Activated naive CD4-positive, alpha-beta T cell treated with anti-CD3 and anti-CD28 coated beads for 36 hours (primary cell): ENCODE measurements at regions of chr1 and their contacts with region 1.

Region 1: GRCh38 chr1:201023517-201023902 is at the start of gene KIF21B:
- DNase-seq: peak; percentile 91
- H3K4me3 Mint-ChIP-seq: peak within 1 kb of the TSS; percentile 90
- H3K27ac Mint-ChIP-seq: peak within 1 kb of the TSS; percentile 100
- H3K4me1 Mint-ChIP-seq: peaks cover 72% of the 10 kb centered on the region
- H3K27me3 Mint-ChIP-seq: no peaks in the 10 kb centered on the region
- total RNA-seq, gene KIF21B: 45.5 to 46.3 TPM

Region 2: GRCh38 chr1:200620273-200621131 is 403.0 kb before region 1 on chr1 and contains the start of gene KIF14:
- CTCF ChIA-PET with region 1: interaction called, 3 read pairs
- intact Hi-C with region 1: loop called (anchors 1 kb)
- DNase-seq: peak; percentile 95
- H3K4me3 Mint-ChIP-seq: peak within 1 kb of the TSS; percentile 92
- H3K27ac Mint-ChIP-seq: peak within 1 kb of the TSS; percentile 66
- H3K4me1 Mint-ChIP-seq: peaks cover 16% of the 10 kb centered on the region
- H3K27me3 Mint-ChIP-seq: peaks cover 2% of the 10 kb centered on the region
- total RNA-seq, gene KIF14: 16.4 to 16.9 TPM

Region 3: DNA sequence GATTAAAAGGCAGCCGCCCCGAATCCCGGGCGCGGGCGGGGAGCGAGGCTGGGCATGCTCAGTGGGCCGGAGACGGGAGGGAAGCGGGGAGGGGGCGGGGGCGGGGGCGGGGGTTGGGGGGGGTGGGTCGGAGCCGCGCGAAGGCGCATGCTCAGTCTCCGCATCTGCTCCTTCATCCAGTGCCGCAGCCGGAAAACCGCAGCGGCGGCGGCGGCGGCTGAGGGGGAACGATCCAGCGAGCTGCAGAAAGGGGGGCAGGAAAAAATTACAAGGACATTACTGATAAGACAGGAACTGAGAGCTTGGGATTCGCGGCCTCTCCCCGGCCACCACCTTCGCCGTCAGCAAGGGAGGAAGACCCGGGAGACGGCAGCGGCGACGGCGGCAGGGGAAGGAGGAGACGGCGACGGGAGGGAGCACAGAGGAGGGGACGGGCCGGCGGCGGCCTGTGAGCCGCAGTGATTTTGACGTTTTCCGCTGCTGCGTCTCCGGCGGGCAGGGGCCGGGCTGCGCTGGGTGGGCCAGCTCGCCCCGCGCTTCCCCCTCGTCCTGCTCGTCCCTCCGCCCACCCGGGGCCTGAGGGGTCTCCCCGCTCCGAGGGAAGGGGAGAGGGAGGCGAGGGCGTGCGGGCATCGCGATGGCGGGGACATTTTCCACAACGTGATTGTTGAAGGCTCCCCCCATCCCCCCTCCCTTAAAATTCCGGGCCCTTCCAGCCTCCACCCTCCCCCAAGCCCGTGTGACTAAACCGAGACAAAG is 284.6 kb before region 1 on chr1 and contains the start of gene CAMSAP2:
- CTCF ChIA-PET with region 1: no interaction called
- intact Hi-C with region 1: loop called (anchors 5 kb)
- DNase-seq: peak; percentile 69
- H3K4me3 Mint-ChIP-seq: peak within 1 kb of the TSS; percentile 98
- H3K27ac Mint-ChIP-seq: peak within 1 kb of the TSS; percentile 89
- H3K4me1 Mint-ChIP-seq: peaks cover 26% of the 10 kb centered on the region
- H3K27me3 Mint-ChIP-seq: no peaks in the 10 kb centered on the region
- total RNA-seq, gene CAMSAP2: 3.9 to 6.5 TPM

Region 4: DNA sequence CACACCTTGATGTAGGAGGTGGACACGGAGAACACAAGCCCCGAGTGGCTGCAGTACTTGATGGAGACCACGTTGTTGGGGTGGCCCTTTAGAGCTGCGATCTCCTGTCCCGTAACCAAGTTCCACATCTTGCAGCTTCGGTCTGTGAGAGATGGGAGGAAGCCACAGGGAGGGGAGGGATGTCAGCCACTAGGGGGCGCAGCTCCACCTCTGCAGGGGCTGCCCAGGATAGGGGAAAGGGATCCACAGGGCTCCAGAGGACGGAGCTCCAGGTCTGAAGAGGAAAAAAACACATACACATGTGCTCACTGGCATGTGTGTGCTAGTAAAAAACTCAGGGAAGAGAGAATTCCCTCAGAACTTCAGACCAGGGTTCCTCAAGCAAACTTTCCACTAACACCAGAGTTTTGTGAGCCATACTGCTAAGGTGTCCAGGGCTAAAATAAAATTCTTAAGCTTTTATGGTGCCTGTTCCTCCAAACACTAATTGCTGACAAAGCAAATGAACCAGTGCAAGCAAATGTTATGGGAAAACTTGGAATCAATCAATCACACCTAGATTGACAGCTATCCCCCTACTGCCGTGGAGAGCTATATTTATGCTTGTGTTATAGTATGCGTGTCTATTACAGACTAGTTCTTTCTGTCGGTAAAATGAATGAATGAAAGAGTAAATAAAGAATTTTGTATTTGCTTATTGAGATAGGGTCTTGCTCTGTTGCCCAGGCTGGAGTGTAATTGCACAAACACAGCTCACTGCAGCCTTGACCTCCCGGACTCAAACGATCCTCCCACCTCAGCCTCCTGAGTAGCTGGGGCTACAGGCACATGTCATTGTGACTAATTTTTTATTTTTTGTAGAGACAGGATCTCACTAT is 43.7 kb before region 1 on chr1:
- CTCF ChIA-PET with region 1: interaction called, 54 read pairs
- intact Hi-C with region 1: loop called (anchors 1 kb)
- DNase-seq: peak; percentile 83
- H3K4me3 Mint-ChIP-seq: no peak overlapping the region
- H3K27ac Mint-ChIP-seq: no peak overlapping the region
- H3K4me1 Mint-ChIP-seq: no peaks in the 10 kb centered on the region
- H3K27me3 Mint-ChIP-seq: no peaks in the 10 kb centered on the region

Region 5: GRCh38 chr1:201036188-201036842 is 12.8 kb after region 1 on chr1:
- CTCF ChIA-PET with region 1: interaction called, 29 read pairs
- intact Hi-C with region 1: no loop called
- DNase-seq: no peak
- H3K4me3 Mint-ChIP-seq: no peak overlapping the region
- H3K27ac Mint-ChIP-seq: no peak overlapping the region
- H3K4me1 Mint-ChIP-seq: no peaks in the 10 kb centered on the region
- H3K27me3 Mint-ChIP-seq: no peaks in the 10 kb centered on the region

Region 6: DNA sequence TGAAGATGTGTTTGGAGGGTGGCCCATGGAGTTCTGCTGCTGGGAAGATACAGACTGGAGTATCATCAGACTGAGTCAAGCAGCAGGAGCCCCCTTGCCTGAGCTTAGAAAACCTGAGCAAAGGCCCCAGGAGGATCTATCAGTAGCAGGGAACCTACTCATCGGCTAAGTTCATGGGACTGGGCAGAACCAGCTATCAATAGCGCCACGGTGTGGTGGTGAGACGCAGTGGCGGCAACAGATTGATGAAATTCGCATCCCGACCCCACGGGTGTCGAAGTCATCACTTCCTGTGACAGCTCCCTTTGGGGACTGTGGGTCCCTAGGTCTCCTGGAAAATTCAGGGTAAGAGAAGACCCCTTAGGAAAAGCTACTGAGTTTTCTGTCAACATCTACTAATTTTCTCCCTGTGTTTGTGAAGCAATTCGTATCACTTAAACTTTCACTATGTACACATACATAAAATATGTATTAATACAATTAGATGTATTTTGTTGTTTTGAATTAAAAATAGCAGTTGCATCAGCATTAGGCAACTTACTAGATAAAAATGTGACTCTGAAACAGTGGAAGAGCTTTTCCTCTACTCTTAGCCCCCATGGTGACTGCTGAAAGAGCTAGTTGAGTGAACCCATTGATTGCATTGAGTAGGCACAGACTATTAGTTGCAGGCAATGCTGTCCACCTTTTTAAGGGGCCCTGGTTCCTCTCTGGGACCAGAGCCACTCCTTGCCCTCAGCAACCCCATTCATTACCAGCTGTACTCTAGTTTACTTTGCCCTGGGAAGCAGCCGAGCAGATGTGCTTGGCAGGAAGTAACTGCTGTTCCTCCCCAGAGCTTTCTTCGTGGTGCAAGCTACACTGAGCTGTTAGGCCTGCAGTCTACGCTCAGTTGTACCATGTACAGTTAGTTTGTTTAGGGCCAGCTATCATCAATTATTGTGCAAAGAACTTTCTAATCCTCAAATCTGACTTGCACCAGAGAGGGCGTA is 96.0 kb after region 1 on chr1:
- CTCF ChIA-PET with region 1: interaction called, 11 read pairs
- intact Hi-C with region 1: no loop called
- DNase-seq: peak; percentile 82
- H3K4me3 Mint-ChIP-seq: no peak overlapping the region
- H3K27ac Mint-ChIP-seq: no peak overlapping the region
- H3K4me1 Mint-ChIP-seq: peaks cover 3% of the 10 kb centered on the region
- H3K27me3 Mint-ChIP-seq: peaks cover 2% of the 10 kb centered on the region

Region 7: GRCh38 chr1:201309426-201309825 is 285.9 kb after region 1 on chr1:
- CTCF ChIA-PET with region 1: no interaction called
- intact Hi-C with region 1: no loop called
- DNase-seq: peak; percentile 42
- H3K4me3 Mint-ChIP-seq: no peak overlapping the region
- H3K27ac Mint-ChIP-seq: no peak overlapping the region
- H3K4me1 Mint-ChIP-seq: peaks cover 7% of the 10 kb centered on the region
- H3K27me3 Mint-ChIP-seq: peaks cover 5% of the 10 kb centered on the region

Region 8: DNA sequence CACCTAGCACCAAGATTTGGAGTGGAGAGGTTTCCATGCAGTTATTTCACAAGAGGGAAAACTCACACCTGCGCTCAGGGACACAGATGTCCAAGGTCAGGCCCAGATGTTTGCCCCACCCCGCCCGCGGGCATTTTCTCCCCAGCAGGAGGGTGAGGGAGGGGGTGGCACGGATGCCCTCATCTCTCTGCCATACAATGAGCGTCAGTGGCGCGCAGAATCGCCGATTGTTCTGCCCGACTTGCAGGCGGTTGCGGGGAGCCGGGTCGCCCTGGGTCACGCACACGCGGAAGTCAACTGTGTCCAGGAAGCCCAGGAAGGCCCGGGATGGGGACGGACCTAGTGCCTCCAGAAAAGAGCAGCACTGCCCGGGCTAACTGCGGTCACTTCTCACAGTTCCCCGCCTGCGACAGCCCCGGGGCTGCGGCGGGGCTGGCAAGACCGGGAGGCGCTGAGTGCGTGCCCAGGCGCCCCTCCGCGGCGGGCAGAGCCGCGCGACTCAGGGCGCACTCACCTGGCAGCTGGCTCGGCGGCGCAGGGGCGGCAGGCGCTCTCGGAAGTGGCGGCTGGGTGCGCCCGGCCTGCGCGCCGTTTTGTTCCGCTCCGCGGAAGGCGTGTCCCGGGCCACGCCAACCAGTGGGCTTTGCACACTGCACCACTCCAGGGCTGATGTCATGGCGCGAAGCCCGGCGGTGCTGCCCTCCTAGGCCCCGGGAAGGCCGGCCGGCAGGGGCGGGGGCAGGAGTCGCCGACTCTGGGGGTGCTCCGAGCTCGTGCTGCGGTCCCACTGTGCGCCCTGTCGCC is 483.2 kb after region 1 on chr1 and contains the start of gene CSRP1:
- CTCF ChIA-PET with region 1: no interaction called
- intact Hi-C with region 1: loop called (anchors 2 kb)
- DNase-seq: peak; percentile 89
- H3K4me3 Mint-ChIP-seq: peak within 1 kb of the TSS; percentile 83
- H3K27ac Mint-ChIP-seq: peak within 1 kb of the TSS; percentile 82
- H3K4me1 Mint-ChIP-seq: peaks cover 42% of the 10 kb centered on the region
- H3K27me3 Mint-ChIP-seq: no peaks in the 10 kb centered on the region
- total RNA-seq, gene CSRP1: 35.7 to 36.6 TPM